Mammary epithelial cell (primary cell): ENCODE measurements at regions of chr13 and their contacts with region 1.

Region 1: GRCh38 chr13:79379274-79379673 is 26.8 kb downstream of the RBM26 start:
- DNase-seq: no peak
- H3K4me3 ChIP-seq: no peak overlapping the region
- H3K27ac ChIP-seq: no peak overlapping the region
- H3K4me1 ChIP-seq: peaks cover 10% of the 10 kb centered on the region
- H3K27me3 ChIP-seq: no peaks in the 10 kb centered on the region
- CTCF ChIP-seq: no peak

Region 2: DNA sequence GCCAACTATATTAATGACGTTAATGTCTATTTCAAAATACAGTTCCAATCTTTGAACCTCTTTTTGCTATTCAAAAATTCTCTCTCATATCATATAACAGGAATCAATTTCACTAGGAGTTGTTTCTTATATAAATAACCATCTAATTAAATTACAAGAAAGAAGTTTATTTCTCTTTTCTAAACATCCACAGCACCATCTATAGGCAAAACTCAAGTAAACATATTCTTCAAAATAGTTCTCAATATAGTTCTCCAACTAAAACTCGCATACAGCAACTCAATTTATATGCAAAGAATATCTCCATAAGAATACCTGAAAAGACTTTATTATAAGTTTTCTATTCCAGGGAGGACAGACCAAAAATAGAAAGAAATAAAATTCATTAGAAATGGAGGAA is 38.8 kb before region 1 on chr13:
- CTCF ChIA-PET with region 1: no interaction called
- dilution Hi-C with region 1: no loop called
- in situ Hi-C with region 1: no loop called
- intact Hi-C with region 1: loop called (anchors 5 kb)
- DNase-seq: no peak
- H3K4me3 ChIP-seq: no peak overlapping the region
- H3K27ac ChIP-seq: no peak overlapping the region
- H3K4me1 ChIP-seq: no peaks in the 10 kb centered on the region
- H3K27me3 ChIP-seq: no peaks in the 10 kb centered on the region
- CTCF ChIP-seq: no peak